ENCODE measurements at regions of chr10 and their contacts with region 1.

Region 1: GRCh38 chr10:110225756-110226542 is 18.5 kb downstream of the MXI1 start:
- DNase-seq: peak; percentile 74 to 93
- ATAC-seq: peak; percentile 80 to 85
- H3K4me3 ChIP-seq: peak overlapping the region; percentile 65
- H3K27ac ChIP-seq: peak overlapping the region; percentile 78 to 89
- H3K4me1 ChIP-seq: peaks cover 10% of the 10 kb centered on the region; the same call in 2 of the 3 replicates
- CTCF ChIP-seq: peak; percentile 91
- EP300 ChIP-seq: no peak
- POLR2A ChIP-seq: no peak; the same call in 1 of the 2 replicates
- RAD21 ChIP-seq: peak in 1 of 2 experiments; percentile 55; a peak in 3 of 5 replicates

Region 2: DNA sequence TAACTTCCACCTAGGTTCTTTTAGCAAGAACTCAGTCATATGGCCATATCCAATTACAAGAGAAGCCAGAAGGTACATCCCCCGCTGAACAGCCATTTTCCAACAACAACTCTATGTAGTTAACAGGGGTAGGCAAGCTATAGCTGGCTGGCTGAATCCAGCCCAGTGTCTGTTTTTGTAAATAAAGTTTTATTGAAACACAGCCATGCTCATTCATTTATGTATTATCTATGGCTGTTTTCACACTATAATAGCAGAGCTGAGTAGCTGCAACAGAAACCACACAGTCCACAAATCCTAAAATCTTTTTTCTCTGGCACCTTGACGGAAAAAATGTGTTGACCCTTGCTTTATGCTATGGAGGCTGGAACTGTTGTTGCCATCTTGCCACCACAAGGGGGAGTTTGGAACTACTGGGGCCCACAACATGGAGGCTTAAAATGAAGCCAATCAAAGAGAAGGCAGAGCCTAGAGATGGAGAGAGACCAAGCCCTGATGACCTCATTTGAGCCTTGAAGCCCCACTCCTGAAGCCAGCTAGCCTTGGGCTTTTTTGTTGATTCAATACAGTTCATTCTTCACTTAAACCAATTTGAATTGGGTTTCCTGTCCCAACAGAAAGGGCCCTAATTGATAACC is 269.4 kb before region 1 on chr10:
- CTCF ChIA-PET with region 1: no interaction called
- POLR2A ChIA-PET with region 1: no interaction called
- DNase-seq: peak; percentile 69 to 82
- ATAC-seq: peak; percentile 86 to 99
- H3K4me3 ChIP-seq: no peak overlapping the region
- H3K27ac ChIP-seq: no peak overlapping the region
- H3K4me1 ChIP-seq: peaks cover 1% of the 10 kb centered on the region; the same call in 1 of the 3 replicates
- CTCF ChIP-seq: peak; percentile 60
- EP300 ChIP-seq: no peak
- POLR2A ChIP-seq: no peak
- RAD21 ChIP-seq: peak; percentile 52 to 69

Region 3: DNA sequence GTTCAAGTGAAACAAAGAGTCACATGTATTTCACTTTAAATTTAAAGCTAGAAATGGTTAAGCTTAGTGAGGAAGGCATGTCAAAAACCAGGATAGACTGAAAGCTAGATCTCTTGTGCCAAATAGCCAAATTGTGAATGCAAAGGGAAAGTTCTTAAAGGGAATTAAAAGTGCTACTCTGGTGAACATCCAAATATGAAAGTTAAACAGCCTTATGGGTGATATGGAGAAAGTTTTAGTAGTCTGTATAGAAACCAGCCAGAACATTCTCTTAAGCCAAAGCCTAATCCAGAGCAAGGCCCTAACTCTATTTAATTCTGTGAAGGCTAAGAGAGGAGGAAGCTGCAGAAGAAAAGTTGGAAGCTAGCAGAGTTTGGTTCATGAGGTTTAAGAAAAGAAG is 28.5 kb after region 1 on chr10:
- CTCF ChIA-PET with region 1: no interaction called
- POLR2A ChIA-PET with region 1: interaction called, 14 read pairs
- DNase-seq: no peak
- ATAC-seq: no peak
- H3K4me3 ChIP-seq: no peak overlapping the region
- H3K27ac ChIP-seq: no peak overlapping the region
- H3K4me1 ChIP-seq: no peaks in the 10 kb centered on the region
- CTCF ChIP-seq: no peak
- EP300 ChIP-seq: no peak
- POLR2A ChIP-seq: no peak
- RAD21 ChIP-seq: no peak